Activated CD4-positive, alpha-beta T cell treated with anti-CD3 and anti-CD28 coated beads, Interleukin-2, amount 10 ng/mL, durations not matched to agents 7 days and 5 days (primary cell): ENCODE measurements at regions of chr17 and their contacts with region 1.

Region 1: GRCh38 chr17:78341559-78342448 is 18.1 kb downstream of the SOCS3 start:
- DNase-seq: no peak
- H3K4me3 Mint-ChIP-seq: no peak overlapping the region
- H3K27ac Mint-ChIP-seq: no peak overlapping the region
- H3K4me1 Mint-ChIP-seq: peaks cover 60% of the 10 kb centered on the region
- H3K27me3 Mint-ChIP-seq: peaks cover 2% of the 10 kb centered on the region

Region 2: GRCh38 chr17:78329263-78330059 is 12.3 kb before region 1 on chr17:
- CTCF ChIA-PET with region 1: interaction called, 10 read pairs
- POLR2A ChIA-PET with region 1: no interaction called
- DNase-seq: no peak
- H3K4me3 Mint-ChIP-seq: no peak overlapping the region
- H3K27ac Mint-ChIP-seq: no peak overlapping the region
- H3K4me1 Mint-ChIP-seq: peaks cover 40% of the 10 kb centered on the region
- H3K27me3 Mint-ChIP-seq: no peaks in the 10 kb centered on the region